Right cardiac atrium (tissue), 5 donors: ENCODE measurements at regions of chr1 and their contacts with region 1.

Region 1: GRCh38 chr1:237041795-237042525 is at the start of gene RYR2:
- DNase-seq: peak; percentile 28 to 77 (median 74)
- ATAC-seq: peak; percentile 68 to 69
- H3K4me3 ChIP-seq: peak within 1 kb of the TSS; percentile 54
- H3K27ac ChIP-seq: peak within 1 kb of the TSS; percentile 83
- H3K4me1 ChIP-seq: no peaks in the 10 kb centered on the region
- H3K27me3 ChIP-seq: no peaks in the 10 kb centered on the region
- total RNA-seq, gene RYR2: 479 to 716 (median 511) TPM

Region 2: DNA sequence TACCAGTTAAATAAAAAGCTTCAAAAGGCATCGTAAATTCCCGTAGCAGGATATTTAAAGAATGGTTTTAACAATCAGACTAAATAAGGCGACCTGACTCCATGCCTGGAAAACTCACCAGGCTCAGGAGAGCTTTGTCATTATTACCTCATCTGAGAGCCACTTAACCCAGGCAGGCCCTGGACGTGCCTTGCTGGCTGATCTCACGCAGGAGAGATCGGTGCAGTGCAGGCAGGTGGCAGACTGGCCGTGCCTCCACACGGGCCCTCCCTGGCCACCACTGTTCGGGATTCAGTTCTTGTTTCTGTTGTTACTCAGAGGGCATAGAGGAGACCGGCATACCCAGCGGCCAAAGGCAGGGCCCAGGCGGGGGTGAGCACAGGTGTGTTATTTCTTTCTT is 44.1 kb before region 1 on chr1:
- intact Hi-C with region 1: loop called in 1 of 4 experiments (anchors 2 kb)
- DNase-seq: peak; percentile 46 to 74 (median 68)
- ATAC-seq: peak; percentile 83 to 87
- H3K4me3 ChIP-seq: no peak overlapping the region
- H3K27ac ChIP-seq: peak overlapping the region; percentile 90
- H3K4me1 ChIP-seq: peaks cover 7% of the 10 kb centered on the region
- H3K27me3 ChIP-seq: no peaks in the 10 kb centered on the region